Astrocyte of the spinal cord (primary cell): ENCODE measurements at regions of chr1 and their contacts with region 1.

Region 1: DNA sequence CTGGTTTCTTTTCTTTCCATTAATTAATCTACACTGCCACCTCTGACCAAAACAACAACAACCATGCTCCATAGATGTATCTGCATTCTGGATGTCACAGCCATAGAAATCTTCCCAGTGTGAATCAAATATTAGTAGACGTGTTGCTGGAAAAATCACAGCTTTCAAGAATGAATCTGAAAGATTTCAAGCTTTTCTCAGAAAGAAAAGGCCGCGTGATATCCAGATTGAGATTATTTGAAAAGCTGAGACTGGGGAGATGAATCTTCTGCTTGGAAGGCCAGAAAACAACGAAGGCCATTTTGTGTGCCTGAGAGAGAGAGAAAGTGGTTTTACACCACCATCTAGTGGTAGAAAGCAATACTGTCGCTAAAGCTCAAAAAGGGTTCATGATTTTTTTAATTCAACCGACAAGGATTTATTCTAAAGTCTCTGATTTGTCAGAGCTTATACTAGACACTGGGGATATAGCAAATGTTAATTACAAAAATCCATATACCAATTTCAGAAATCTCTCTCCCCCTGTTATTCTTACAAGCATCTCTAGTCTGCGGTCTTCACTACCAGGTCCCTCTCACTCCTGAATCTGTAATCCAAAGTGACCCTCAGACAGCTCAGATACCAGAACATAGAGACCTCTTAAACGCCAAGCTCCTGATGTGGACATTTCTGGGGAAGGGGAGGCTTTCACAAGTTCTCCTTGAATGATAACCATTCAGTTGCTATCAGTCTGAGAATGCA is 87.5 kb upstream of the SGIP1 start:
- DNase-seq: peak; percentile 75
- H3K4me3 ChIP-seq: no peak overlapping the region
- CTCF ChIP-seq: peak; percentile 75

Region 2: GRCh38 chr1:65963156-65963888 is 483.1 kb before region 1 on chr1:
- in situ Hi-C with region 1: no loop called
- DNase-seq: no peak
- H3K4me3 ChIP-seq: no peak overlapping the region
- CTCF ChIP-seq: no peak

Region 3: DNA sequence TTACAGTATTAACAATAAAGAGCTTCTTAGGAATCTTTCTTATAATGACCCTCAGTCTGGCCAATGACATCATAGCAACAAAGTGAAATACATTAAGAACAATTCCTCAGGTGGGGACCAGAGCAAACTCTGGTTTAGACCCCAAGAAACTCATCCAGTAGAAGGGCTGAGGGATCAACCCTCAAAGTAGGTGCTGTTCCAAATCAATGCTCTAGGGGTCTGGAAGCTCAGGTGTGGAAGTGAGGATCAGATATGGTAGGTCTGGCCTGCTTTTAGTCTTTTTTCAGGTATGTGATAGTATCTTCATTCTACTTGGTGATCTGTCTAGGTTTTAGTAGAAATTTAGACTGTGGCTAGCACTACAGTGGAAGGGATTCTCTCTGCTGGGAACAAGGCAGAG is 362.0 kb before region 1 on chr1:
- in situ Hi-C with region 1: no loop called
- DNase-seq: no peak
- H3K4me3 ChIP-seq: no peak overlapping the region
- CTCF ChIP-seq: no peak

Region 4: DNA sequence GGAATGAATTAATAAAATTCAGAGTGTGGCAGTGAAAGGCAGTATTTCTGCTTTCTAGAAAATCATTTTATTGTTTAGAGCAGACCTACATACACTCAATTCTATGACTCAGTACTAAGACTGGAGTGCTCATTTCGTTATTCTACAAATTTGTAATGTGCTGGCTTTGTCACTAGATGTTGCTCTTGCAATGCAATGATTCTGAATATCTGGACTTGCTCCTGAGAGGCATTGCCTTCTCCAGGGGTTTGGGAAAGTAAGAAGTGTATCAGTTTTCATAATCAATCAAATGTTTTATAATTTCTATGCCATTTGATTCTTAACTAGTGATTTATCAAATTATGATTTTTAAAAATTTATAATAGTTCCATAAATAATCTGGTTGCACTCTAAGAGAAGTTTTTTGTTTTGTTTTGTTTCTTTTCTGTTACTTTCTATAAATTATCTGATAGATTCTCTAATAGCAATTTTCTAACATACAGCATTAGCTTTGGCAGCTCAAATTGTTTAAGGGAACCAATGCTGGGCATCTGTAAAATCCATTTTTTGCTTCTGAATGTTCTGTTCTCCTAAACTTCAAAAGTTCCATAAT is 193.0 kb before region 1 on chr1:
- in situ Hi-C with region 1: loop called (anchors 25 kb)
- DNase-seq: peak; percentile 82
- H3K4me3 ChIP-seq: no peak overlapping the region
- CTCF ChIP-seq: peak; percentile 75

Region 5: GRCh38 chr1:66924756-66925557 is 478.5 kb after region 1 on chr1 and contains the starts of genes DNAI4 and MIER1:
- in situ Hi-C with region 1: no loop called
- DNase-seq: peak; percentile 99
- H3K4me3 ChIP-seq: peak within 1 kb of the TSS; percentile 92
- CTCF ChIP-seq: no peak